Prostate gland (tissue), 2 donors: ENCODE measurements at regions of chr4 and their contacts with region 1.

Region 1: DNA sequence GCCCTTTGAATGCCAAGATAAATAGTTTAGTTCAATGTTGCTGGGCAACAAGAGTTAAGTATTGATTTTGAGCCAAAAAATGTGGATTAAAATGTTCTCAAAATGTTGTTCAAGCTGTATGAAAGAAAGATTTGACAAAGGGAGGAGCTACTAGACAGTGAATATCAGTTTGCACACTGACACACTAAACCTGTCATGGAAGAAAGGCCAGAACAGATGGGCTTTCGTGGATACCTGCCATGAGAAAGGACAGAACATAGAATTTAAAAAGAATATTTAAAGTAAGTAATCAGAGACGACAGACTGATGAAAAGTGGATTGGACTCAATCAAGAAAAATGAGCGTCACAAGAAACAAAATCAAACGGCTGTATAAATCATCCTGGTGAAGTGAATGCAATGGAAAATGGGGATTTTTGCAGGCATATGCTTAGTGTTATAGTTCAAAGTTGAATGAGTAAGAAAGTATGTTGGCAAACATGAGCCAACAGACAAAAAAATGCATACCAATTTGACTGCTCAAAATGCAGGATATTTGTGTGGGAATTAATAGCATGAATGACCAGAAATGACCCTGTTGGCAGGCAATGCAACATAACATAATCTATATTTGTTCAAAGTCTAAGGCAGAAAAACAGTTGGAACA is 7.4 kb downstream of the PCDH18 start:
- DNase-seq: no peak
- H3K4me3 ChIP-seq: no peak overlapping the region
- H3K27ac ChIP-seq: peak overlapping the region in 1 of 2 donors; percentile 21
- H3K4me1 ChIP-seq: no peaks in the 10 kb centered on the region
- H3K27me3 ChIP-seq: no peaks in the 10 kb centered on the region
- CTCF ChIP-seq: no peak
- POLR2A ChIP-seq: no peak

Region 2: GRCh38 chr4:137587796-137588195 is 62.9 kb after region 1 on chr4:
- intact Hi-C with region 1: no loop called
- DNase-seq: no peak
- H3K4me3 ChIP-seq: no peak overlapping the region
- H3K27ac ChIP-seq: no peak overlapping the region
- H3K4me1 ChIP-seq: no peaks in the 10 kb centered on the region
- H3K27me3 ChIP-seq: no peaks in the 10 kb centered on the region
- CTCF ChIP-seq: no peak
- POLR2A ChIP-seq: no peak

Region 3: DNA sequence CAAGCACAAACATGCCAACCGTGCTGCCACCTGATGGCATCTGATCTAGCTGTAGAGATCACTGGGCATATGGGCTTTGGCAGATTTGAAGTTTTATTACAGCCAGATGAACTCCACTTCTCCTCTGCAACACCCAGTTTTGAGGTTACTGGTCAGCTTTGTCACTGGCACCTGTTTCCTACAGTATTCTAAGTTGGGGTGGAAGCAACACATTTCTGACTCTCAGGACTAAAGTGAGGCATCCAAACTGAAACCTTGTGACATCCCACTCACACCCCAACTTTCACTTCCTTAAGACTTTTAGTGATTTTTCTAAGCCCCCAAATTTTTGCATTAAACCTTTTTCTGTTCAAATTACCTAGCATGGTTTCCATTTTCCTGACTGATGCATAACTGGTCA is 122.5 kb after region 1 on chr4:
- intact Hi-C with region 1: no loop called
- DNase-seq: no peak
- H3K4me3 ChIP-seq: no peak overlapping the region
- H3K27ac ChIP-seq: no peak overlapping the region
- H3K4me1 ChIP-seq: no peaks in the 10 kb centered on the region
- H3K27me3 ChIP-seq: no peaks in the 10 kb centered on the region
- CTCF ChIP-seq: no peak
- POLR2A ChIP-seq: no peak

Region 4: DNA sequence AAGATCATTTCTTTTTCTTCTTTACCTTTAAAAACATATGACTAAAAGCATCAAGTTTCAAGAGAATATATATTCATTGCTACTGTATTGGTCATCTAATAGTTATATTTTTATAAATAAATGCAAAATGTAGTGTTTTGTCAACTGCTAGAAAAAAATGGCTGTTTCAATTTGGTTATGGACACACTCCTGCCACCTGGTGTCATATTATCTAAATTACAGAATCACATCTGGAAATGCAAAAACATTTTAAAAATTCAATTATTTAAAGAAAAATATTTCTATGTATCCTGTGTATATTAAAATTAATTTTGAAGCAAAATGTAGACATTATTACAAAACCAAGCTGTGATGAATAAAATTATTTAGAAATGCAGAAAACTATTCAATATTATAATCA is 336.8 kb after region 1 on chr4:
- intact Hi-C with region 1: loop called (anchors 10 kb)
- DNase-seq: no peak
- H3K4me3 ChIP-seq: no peak overlapping the region
- H3K27ac ChIP-seq: no peak overlapping the region
- H3K4me1 ChIP-seq: no peaks in the 10 kb centered on the region
- H3K27me3 ChIP-seq: no peaks in the 10 kb centered on the region
- CTCF ChIP-seq: peak in 3 of 4 experiments; percentile 27 to 38 (median 29)
- POLR2A ChIP-seq: no peak